Activated T-helper 1 cell treated with anti-CD3 and anti-CD28 coated beads, Interleukin-12 subunit alpha, Interleukin-12 subunit beta, Interleukin-2, Interleukin-4 antibody, amounts not matched to agents 30 ng/mL and 10 ng/mL and 1 ng/mL, durations not matched to agents 14 hours and 24 hours and 36 hours (primary cell): ENCODE measurements at regions of chrX and their contacts with region 1.

Region 1: DNA sequence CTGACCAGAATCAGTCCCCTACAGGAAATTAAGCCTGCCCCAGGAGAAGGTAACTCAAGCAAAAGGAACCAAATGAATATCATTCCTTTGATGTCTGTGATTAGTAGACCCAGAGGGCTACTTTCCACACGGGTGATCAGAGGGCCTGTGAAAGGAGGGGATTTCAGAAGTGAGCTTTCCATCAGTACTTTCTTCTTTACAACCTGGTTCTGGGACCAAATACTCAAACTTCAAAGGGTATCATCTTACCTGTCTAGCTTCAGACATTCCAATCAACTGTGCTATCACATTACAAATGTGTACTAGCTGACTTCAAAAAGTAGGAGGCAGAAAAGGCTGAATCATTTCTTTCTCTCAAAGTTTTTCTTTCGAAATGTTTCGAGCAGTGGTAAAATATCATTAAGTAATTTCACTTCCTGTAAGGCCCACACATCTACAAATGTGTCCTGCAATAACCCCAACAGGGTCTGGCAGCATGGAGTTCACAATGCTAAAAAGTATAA is 23.9 kb downstream of the ACSL4 start:
- DNase-seq: no peak
- H3K4me3 Mint-ChIP-seq: peak overlapping the region; percentile 48
- H3K27ac Mint-ChIP-seq: peak overlapping the region; percentile 74
- H3K4me1 Mint-ChIP-seq: peaks cover 73% of the 10 kb centered on the region
- H3K27me3 Mint-ChIP-seq: no peaks in the 10 kb centered on the region

Region 2: GRCh38 chrX:109536439-109537336 is 172.5 kb before region 1 on chrX and contains the start of gene NXT2:
- intact Hi-C with region 1: loop called (anchors 5 kb)
- DNase-seq: peak; percentile 79
- H3K4me3 Mint-ChIP-seq: peak within 1 kb of the TSS; percentile 95
- H3K27ac Mint-ChIP-seq: peak within 1 kb of the TSS; percentile 98
- H3K4me1 Mint-ChIP-seq: peaks cover 25% of the 10 kb centered on the region
- H3K27me3 Mint-ChIP-seq: peaks cover 2% of the 10 kb centered on the region
- total RNA-seq, gene NXT2: 10.3 and 11.8 TPM in 2 replicates

Region 3: DNA sequence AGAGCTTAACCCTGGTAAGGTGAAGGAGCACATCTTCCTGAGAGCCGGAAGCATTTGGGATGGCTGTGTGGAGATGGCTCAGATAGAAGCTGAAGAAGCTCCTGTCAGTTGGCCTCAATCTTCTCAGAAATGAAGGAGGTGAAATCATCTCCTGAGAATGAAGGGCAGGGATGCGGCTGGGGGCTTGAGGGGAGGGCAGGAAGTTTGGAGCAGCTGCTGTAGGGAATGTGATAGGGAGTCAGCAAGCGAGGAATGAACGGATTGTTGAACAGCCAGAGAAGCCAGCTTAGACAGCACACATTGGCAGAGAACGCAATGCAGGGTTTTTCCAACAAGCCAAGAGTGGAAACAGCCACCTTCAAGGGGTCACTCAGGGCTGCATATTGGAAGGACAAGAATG is 94.2 kb before region 1 on chrX:
- intact Hi-C with region 1: no loop called
- DNase-seq: no peak
- H3K4me3 Mint-ChIP-seq: no peak overlapping the region
- H3K27ac Mint-ChIP-seq: no peak overlapping the region
- H3K4me1 Mint-ChIP-seq: peaks cover under 1% of the 10 kb centered on the region
- H3K27me3 Mint-ChIP-seq: no peaks in the 10 kb centered on the region

Region 4: DNA sequence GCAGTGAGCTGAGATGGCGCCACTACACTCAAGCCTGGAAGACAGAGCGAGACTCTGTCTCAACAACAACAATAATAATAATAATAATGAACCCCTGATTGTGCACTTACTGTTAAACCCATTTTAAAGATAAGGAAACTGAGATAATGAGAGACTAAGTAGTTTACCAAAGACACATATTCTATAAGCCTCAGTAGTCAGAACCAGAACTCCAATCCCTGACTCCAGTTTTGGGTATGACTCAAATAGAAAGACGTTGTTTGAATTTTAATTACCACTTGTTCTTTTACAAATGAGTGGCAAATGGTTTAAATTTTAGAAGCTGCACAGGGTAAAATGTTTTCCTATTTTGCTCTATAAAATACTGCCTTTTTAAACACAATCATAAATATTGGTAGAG is 13.5 kb before region 1 on chrX:
- intact Hi-C with region 1: loop called (anchors 2 kb)
- DNase-seq: no peak
- H3K4me3 Mint-ChIP-seq: no peak overlapping the region
- H3K27ac Mint-ChIP-seq: no peak overlapping the region
- H3K4me1 Mint-ChIP-seq: peaks cover 18% of the 10 kb centered on the region
- H3K27me3 Mint-ChIP-seq: no peaks in the 10 kb centered on the region

Region 5: GRCh38 chrX:109782994-109783700 is 74.0 kb after region 1 on chrX:
- intact Hi-C with region 1: loop called (anchors 5 kb)
- DNase-seq: no peak
- H3K4me3 Mint-ChIP-seq: peak overlapping the region; percentile 76
- H3K27ac Mint-ChIP-seq: peak overlapping the region; percentile 92
- H3K4me1 Mint-ChIP-seq: peaks cover 17% of the 10 kb centered on the region
- H3K27me3 Mint-ChIP-seq: no peaks in the 10 kb centered on the region

Region 6: DNA sequence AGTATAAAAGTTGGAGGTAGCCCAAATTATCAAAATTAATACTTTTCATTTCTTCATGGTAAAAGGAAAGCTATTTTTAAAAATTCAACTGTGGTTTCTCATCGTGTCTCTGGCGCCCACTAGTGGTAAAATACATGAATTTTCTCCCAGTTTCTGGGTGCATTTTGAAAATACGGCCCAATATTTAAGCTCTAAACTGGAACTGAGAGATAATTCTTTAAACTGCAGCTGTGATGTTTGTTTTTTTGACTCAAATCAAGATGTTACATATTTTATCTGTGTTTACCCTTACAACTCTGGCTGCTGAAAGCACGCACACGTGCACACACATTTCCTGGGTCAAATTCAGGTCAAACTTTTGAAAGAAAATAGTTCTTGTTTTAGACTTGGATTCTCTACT is 147.8 kb after region 1 on chrX:
- intact Hi-C with region 1: loop called (anchors 1 kb)
- DNase-seq: no peak
- H3K4me3 Mint-ChIP-seq: no peak overlapping the region
- H3K27ac Mint-ChIP-seq: no peak overlapping the region
- H3K4me1 Mint-ChIP-seq: peaks cover 5% of the 10 kb centered on the region
- H3K27me3 Mint-ChIP-seq: peaks cover 4% of the 10 kb centered on the region